Activated CD4-positive, alpha-beta memory T cell treated with anti-CD3 and anti-CD28 coated beads for 36 hours (primary cell): ENCODE measurements at regions of chr3 and their contacts with region 1.

Region 1: DNA sequence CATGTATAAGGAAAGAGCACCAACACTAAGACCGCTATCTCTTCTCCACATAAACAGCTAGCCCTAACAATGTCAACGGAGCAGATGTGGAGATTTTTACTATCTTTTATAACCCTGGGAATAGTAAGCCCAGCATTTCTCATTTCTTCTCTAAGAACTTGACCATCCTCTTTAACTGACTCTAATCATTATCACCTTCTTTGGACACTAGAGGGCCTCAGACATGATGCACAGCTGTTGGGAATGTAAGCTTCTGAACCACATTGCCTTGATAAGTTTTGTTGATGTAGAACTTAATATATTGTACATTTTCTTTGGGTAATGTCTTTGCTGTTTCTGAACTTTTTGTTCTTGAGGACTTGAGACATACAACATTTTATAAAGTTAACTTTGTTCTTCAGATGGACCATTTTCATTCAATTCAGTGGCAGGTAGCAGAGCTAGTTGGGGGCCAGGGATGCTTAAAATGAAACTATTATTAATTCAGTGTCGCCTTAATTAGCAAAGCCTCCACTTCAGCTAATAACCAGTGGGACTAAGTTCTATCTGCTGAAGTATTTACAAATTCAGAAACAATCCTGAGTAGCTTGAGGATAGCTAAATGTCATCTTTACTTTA is 9.6 kb upstream of the TAGLN3 start:
- DNase-seq: no peak
- H3K4me3 Mint-ChIP-seq: no peak overlapping the region
- H3K27ac Mint-ChIP-seq: no peak overlapping the region
- H3K4me1 Mint-ChIP-seq: peaks cover 27% of the 10 kb centered on the region
- H3K27me3 Mint-ChIP-seq: no peaks in the 10 kb centered on the region

Region 2: DNA sequence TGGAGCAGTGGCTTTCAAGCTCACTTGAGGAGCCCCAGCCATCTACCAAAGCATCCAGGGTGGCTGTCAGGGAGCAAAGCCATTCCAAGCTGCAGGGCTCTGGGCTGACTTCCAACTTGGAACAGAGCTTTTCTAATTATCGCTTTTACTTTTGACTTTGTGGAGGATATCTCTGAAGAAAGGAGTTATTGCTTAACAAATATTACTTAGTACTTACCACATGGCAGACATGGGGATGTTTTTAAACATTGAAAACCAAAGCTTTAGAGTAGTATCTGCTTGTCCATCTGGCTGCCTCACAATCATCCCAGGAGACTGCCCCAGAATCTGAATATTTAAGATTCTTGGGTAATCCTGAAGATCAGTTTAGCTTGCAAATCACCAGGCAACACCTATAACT is 18.5 kb after region 1 on chr3:
- CTCF ChIA-PET with region 1: interaction called, 395 read pairs
- POLR2A ChIA-PET with region 1: interaction called, 10 read pairs
- intact Hi-C with region 1: loop called (anchors 2 kb)
- DNase-seq: no peak
- H3K4me3 Mint-ChIP-seq: no peak overlapping the region
- H3K27ac Mint-ChIP-seq: no peak overlapping the region
- H3K4me1 Mint-ChIP-seq: peaks cover 29% of the 10 kb centered on the region
- H3K27me3 Mint-ChIP-seq: no peaks in the 10 kb centered on the region

Region 3: DNA sequence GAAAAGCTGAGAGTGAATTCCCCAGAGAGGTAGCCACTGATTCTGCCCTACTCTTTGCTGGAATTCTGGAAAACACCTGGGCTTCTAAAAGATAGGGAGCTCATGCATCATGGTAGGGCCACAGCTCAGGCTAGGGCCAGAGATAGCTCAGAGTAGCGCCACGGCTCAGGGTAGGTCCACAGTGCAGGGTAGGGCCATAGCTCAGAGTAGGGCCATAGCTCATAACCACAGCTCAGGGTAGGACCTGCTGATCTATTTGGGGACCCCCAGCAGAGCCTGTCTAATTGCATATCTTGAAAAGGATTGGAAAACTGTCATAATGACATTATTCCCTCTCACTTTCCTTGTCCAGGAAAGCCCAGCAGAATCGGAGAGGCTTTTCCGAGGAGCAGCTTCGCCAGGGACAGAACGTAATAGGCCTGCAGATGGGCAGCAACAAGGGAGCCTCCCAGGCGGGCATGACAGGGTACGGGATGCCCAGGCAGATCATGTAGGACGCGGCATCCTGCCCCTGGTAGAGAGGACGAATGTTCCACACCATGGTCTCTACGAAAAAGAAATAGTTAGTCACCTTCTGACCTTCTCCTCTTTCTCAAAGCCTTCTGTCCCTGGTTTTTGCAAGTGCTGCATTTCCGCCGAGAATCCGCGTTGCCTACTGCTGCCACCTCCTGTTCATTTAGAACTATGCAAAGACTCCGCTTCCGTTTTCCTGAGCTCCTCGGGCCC is 24.1 kb after region 1 on chr3:
- CTCF ChIA-PET with region 1: interaction called, 395 read pairs
- POLR2A ChIA-PET with region 1: interaction called, 7 read pairs
- intact Hi-C with region 1: loop called (anchors 1 kb)
- DNase-seq: peak; percentile 82
- H3K4me3 Mint-ChIP-seq: no peak overlapping the region
- H3K27ac Mint-ChIP-seq: peak overlapping the region; percentile 40
- H3K4me1 Mint-ChIP-seq: peaks cover 19% of the 10 kb centered on the region
- H3K27me3 Mint-ChIP-seq: no peaks in the 10 kb centered on the region